Endothelial cell of umbilical vein (primary cell): ENCODE measurements at regions of chr19 and their contacts with region 1.

Region 1: DNA sequence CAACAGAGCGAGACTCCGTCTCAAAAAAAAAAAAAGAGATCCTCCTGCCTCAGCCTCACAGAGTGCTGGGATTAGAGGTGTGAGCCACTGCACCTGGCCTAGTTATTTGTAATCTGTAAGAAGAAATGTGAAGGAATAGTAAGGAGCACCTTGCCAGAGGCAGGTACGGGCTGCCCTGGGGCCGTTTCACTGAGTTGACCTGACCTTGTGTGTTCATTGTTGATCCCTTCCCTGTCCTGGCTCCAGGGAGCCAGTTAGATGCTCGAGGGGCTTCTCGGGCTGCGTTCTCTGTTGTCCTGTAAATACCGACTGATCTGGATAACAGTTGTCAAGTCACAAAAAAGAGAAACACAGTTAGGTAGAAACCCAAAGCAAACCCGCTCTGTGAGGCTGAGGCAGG is 55.3 kb downstream of the ARHGEF18 start:
- DNase-seq: no peak
- H3K4me3 ChIP-seq: no peak overlapping the region
- H3K27ac ChIP-seq: no peak overlapping the region
- H3K4me1 ChIP-seq: no peaks in the 10 kb centered on the region
- H3K27me3 ChIP-seq: no peaks in the 10 kb centered on the region
- CTCF ChIP-seq: no peak
- POLR2A ChIP-seq: no peak

Region 2: GRCh38 chr19:6489278-6490061 is 914.6 kb before region 1 on chr19:
- CTCF ChIA-PET with region 1: no interaction called
- POLR2A ChIA-PET with region 1: no interaction called
- dilution Hi-C with region 1: no loop called
- intact Hi-C with region 1: loop called (anchors 5 kb)
- DNase-seq: no peak
- H3K4me3 ChIP-seq: no peak overlapping the region
- H3K27ac ChIP-seq: no peak overlapping the region
- H3K4me1 ChIP-seq: no peaks in the 10 kb centered on the region
- H3K27me3 ChIP-seq: no peaks in the 10 kb centered on the region
- CTCF ChIP-seq: no peak
- POLR2A ChIP-seq: no peak

Region 3: DNA sequence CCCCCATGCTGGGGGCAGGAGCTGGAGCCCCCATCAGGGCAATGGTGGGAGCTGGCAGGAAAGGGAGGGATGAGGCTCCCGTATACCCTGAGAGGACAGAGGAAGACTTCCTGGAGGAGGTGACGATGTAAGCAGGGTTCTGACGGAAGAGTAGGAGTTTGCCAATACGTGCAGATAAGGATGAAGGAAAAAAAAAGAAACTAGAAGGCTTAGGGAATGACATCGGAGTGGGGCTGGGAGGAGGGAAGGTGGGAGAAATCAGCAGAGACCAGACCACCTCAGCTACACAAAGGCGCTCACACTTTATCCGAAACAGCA is 23.0 kb before region 1 on chr19:
- CTCF ChIA-PET with region 1: no interaction called
- POLR2A ChIA-PET with region 1: no interaction called
- dilution Hi-C with region 1: no loop called
- intact Hi-C with region 1: no loop called
- DNase-seq: no peak
- H3K4me3 ChIP-seq: no peak overlapping the region
- H3K27ac ChIP-seq: no peak overlapping the region
- H3K4me1 ChIP-seq: no peaks in the 10 kb centered on the region
- H3K27me3 ChIP-seq: no peaks in the 10 kb centered on the region
- CTCF ChIP-seq: no peak
- POLR2A ChIP-seq: no peak